Activated CD4-positive, alpha-beta T cell treated with anti-CD3 and anti-CD28 coated beads, Interleukin-2, amount 10 ng/mL, durations not matched to agents 24 days and 14 days (primary cell): ENCODE measurements at regions of chr10 and their contacts with region 1.

Region 1: DNA sequence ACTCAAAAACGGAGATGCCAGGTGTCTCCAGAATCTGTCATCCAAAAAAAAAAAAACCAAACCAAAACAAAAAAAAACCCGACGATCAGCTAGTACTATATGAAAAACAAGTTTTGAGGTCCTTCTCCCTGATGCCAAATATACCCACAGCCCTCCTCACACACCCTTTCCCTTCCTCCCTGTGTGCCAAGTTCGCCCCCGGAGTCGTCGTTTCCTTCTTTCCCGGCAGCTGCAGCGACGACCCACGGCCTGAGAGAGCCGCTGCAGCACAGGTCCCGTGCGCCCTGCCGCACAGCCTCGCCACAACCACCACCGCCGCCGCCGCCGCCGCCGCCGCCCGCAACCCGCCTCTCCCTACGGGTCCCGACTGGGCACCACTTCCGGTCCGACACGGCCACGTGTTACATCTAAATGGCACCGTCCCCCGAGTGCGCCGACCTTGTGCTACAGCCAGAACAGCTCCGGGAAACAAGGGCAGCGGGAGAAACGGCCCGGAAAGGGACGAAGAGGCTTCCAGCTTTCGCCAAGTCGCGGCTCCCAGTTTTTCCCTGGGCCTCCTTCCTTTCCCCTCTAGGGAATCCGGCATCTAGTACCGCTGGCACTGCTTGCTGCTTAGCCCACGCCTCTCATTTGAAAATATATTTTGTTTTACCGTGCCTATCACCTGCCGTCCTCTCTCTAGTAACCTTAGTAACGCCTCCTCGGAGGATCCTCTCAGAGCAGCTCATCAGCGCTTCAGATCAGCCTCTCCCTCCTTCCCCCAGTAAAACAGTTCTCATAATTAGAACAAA is at the start of gene FRA10AC1:
- DNase-seq: peak; percentile 97
- H3K4me3 Mint-ChIP-seq: no peak within 1 kb of the TSS
- H3K27ac Mint-ChIP-seq: no peak within 1 kb of the TSS
- H3K4me1 Mint-ChIP-seq: peaks cover 10% of the 10 kb centered on the region
- H3K27me3 Mint-ChIP-seq: no peaks in the 10 kb centered on the region
- total RNA-seq, gene FRA10AC1: 22.5 and 22.8 TPM in 2 replicates

Region 2: GRCh38 chr10:93496322-93497041 is 205.9 kb before region 1 on chr10 and contains the start of gene CEP55:
- intact Hi-C with region 1: loop called (anchors 1 kb)
- DNase-seq: peak; percentile 99
- H3K4me3 Mint-ChIP-seq: peak within 1 kb of the TSS; percentile 90
- H3K27ac Mint-ChIP-seq: peak within 1 kb of the TSS; percentile 93
- H3K4me1 Mint-ChIP-seq: peaks cover 34% of the 10 kb centered on the region
- H3K27me3 Mint-ChIP-seq: no peaks in the 10 kb centered on the region
- total RNA-seq, gene CEP55: 58.5 and 59.3 TPM in 2 replicates

Region 3: DNA sequence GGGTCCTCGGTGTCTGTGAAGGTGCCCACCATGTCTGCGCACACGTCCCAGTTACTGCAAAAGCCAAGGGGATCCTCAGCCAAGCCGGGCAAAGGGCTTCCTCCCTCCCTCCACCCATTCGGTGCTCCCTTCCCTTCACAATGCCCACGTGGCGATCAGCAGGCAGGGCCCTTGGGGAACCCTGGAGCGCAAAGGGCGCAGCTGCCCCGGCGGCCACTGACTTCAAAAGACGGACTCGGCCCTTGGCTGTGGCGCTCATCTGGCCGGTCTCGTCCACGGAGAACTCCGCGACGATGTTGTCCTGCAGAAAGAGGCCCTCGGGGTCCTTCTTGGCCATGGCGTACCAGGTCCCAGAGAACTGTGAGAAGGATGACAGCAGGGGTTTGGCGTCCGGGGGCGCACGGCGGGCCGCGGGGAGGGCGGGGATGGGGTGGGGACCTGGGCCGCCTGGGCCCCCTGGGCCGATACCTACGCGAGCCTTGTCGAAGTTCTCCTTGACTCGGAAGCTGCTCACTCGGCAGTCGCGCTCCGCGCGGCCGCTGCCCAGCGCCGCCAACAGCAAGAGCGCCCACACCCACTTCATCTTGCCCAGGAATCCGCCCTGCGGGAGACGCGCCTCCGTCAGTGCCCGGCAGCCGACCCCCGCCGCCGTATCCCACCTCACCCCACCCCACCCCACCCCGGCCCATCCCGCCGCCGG is 101.8 kb before region 1 on chr10:
- intact Hi-C with region 1: no loop called
- DNase-seq: no peak
- H3K4me3 Mint-ChIP-seq: no peak overlapping the region
- H3K27ac Mint-ChIP-seq: no peak overlapping the region
- H3K4me1 Mint-ChIP-seq: no peaks in the 10 kb centered on the region
- H3K27me3 Mint-ChIP-seq: peaks cover 54% of the 10 kb centered on the region

Region 4: GRCh38 chr10:93893646-93894515 is 191.5 kb after region 1 on chr10 and contains the start of gene SLC35G1:
- intact Hi-C with region 1: loop called (anchors 2 kb)
- DNase-seq: peak; percentile 88
- H3K4me3 Mint-ChIP-seq: peak within 1 kb of the TSS; percentile 86
- H3K27ac Mint-ChIP-seq: peak within 1 kb of the TSS; percentile 64
- H3K4me1 Mint-ChIP-seq: peaks cover 34% of the 10 kb centered on the region
- H3K27me3 Mint-ChIP-seq: peaks cover 9% of the 10 kb centered on the region
- total RNA-seq, gene SLC35G1: 6.3 and 6.4 TPM in 2 replicates